Activated naive CD4-positive, alpha-beta T cell treated with anti-CD3 and anti-CD28 coated beads for 36 hours (primary cell): ENCODE measurements at regions of chr11 and their contacts with region 1.

Region 1: GRCh38 chr11:63768237-63769043 is at the start of gene ZFTA:
- DNase-seq: peak; percentile 49
- H3K4me3 Mint-ChIP-seq: peak within 1 kb of the TSS; percentile 88
- H3K27ac Mint-ChIP-seq: no peak within 1 kb of the TSS
- H3K4me1 Mint-ChIP-seq: peaks cover 11% of the 10 kb centered on the region
- H3K27me3 Mint-ChIP-seq: peaks cover 12% of the 10 kb centered on the region
- total RNA-seq, gene ZFTA: 0.91 TPM

Region 2: GRCh38 chr11:63582935-63583677 is 185.3 kb before region 1 on chr11:
- CTCF ChIA-PET with region 1: no interaction called
- intact Hi-C with region 1: no loop called
- DNase-seq: no peak
- H3K4me3 Mint-ChIP-seq: no peak overlapping the region
- H3K27ac Mint-ChIP-seq: no peak overlapping the region
- H3K4me1 Mint-ChIP-seq: peaks cover 12% of the 10 kb centered on the region
- H3K27me3 Mint-ChIP-seq: no peaks in the 10 kb centered on the region

Region 3: DNA sequence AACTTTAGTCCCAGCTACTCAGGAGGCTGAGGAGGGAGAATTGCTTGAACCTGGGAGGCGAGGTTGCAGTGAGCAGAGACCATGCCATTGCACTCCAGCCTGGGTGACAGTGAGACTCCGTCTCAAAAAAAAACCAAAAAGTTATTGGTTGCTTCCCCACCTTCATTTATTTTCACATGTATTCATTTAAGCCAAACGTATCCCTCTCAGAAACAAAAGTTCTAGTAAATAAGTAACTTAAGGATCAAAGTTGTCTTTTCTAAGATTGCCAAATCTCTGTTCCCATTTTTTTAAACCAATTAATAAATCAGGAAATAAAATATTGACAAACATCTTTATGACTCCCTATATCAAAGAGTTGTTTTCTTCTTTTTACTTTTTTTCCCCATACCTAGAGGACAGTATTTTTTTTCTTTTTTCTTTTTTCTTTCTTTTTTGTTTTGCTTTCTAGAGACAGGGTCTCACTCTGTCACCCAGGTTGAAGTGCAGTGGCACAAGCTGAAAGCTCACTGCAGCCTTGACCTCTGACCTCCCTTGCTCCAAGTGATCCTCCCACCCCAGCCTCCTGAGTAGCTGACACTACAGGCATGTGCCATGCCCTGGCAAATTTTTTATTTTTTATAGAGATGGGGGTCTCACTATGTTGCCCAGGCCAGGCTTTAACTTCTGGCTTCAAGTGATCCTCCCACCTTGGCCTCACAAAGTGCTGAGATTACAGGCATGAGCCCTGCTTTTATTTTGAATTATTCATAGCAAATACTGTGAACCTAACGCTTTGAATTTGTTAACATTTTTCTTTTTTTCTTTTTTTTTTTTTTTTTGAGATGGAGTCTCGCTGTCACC is 11.3 kb before region 1 on chr11:
- CTCF ChIA-PET with region 1: interaction called, 10 read pairs
- intact Hi-C with region 1: no loop called
- DNase-seq: no peak
- H3K4me3 Mint-ChIP-seq: no peak overlapping the region
- H3K27ac Mint-ChIP-seq: no peak overlapping the region
- H3K4me1 Mint-ChIP-seq: no peaks in the 10 kb centered on the region
- H3K27me3 Mint-ChIP-seq: no peaks in the 10 kb centered on the region

Region 4: DNA sequence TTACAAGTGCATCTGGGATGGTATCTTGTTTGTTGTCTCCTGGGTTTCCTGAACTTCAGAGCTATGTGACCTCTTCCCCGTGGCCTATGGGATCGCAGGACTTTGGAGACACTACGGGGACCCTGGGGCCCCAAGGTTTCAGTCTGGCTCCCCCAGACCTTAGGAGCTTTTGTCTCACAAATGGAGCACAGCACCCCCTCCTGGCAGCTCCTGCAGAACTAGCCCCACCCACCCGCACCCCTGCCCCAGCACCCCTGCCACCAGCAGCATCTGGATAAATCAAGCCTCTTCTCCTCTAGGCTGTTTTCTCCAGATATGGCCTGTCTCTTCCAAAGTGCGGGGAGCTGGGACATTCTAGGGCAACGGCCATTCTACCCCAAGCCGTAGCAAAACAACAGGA is 138.1 kb after region 1 on chr11:
- CTCF ChIA-PET with region 1: no interaction called
- intact Hi-C with region 1: loop called (anchors 2 kb)
- DNase-seq: peak; percentile 65
- H3K4me3 Mint-ChIP-seq: no peak overlapping the region
- H3K27ac Mint-ChIP-seq: no peak overlapping the region
- H3K4me1 Mint-ChIP-seq: no peaks in the 10 kb centered on the region
- H3K27me3 Mint-ChIP-seq: no peaks in the 10 kb centered on the region

Region 5: DNA sequence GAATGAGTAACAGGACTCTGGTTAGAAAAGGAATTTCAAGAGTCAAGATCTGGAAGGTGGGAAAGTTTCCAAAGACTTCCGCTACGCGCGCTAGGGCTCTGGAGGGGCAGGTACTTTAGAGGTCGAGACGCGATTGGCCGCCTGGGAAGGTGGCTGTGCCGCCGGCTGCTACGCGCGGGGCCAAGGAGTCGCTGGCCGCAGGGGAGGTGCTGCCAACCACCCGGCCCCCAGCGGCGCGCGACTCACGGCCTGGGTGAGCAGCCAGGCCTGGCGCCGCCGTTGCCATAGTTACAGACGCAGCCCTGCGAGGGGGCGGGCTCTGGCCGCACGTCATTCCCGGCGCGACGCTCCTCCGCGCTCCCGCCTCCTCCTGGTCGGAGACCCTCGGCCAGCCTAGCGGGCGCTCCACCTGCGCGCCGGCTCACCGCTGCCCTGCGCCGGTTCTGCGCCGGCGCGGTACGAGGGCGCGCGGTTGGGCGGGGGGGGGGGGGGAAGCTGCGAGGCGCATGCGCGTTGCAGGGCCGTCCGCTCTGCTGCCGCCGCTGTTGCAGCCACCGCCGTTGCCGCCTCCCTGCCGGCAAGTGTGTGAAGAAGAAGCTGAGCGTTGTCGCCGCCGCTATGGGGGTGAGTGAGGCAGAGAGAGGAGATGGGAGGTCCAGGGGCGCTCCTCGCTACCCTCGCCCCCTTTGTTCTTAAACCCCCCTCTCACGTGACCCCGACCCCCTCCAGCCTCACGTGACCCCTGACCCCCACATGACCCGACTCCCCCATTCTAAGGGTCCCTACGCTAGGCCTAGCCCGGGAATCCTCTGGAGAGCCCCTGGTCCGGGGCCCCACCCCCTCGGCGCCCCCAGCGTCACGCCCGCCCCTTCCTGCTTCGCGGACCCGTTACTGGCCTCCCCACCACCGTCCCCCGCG is 170.3 kb after region 1 on chr11 and contains the start of gene NAA40:
- CTCF ChIA-PET with region 1: no interaction called
- intact Hi-C with region 1: loop called (anchors 5 kb)
- DNase-seq: peak; percentile 90
- H3K4me3 Mint-ChIP-seq: peak within 1 kb of the TSS; percentile 77
- H3K27ac Mint-ChIP-seq: peak within 1 kb of the TSS; percentile 52
- H3K4me1 Mint-ChIP-seq: peaks cover 13% of the 10 kb centered on the region
- H3K27me3 Mint-ChIP-seq: no peaks in the 10 kb centered on the region
- total RNA-seq, gene NAA40: 10.3 to 13.2 TPM

Region 6: GRCh38 chr11:63945477-63946163 is 177.2 kb after region 1 on chr11:
- CTCF ChIA-PET with region 1: interaction called, 17 read pairs
- intact Hi-C with region 1: no loop called
- DNase-seq: peak; percentile 65
- H3K4me3 Mint-ChIP-seq: no peak overlapping the region
- H3K27ac Mint-ChIP-seq: no peak overlapping the region
- H3K4me1 Mint-ChIP-seq: peaks cover 3% of the 10 kb centered on the region
- H3K27me3 Mint-ChIP-seq: no peaks in the 10 kb centered on the region

Region 7: DNA sequence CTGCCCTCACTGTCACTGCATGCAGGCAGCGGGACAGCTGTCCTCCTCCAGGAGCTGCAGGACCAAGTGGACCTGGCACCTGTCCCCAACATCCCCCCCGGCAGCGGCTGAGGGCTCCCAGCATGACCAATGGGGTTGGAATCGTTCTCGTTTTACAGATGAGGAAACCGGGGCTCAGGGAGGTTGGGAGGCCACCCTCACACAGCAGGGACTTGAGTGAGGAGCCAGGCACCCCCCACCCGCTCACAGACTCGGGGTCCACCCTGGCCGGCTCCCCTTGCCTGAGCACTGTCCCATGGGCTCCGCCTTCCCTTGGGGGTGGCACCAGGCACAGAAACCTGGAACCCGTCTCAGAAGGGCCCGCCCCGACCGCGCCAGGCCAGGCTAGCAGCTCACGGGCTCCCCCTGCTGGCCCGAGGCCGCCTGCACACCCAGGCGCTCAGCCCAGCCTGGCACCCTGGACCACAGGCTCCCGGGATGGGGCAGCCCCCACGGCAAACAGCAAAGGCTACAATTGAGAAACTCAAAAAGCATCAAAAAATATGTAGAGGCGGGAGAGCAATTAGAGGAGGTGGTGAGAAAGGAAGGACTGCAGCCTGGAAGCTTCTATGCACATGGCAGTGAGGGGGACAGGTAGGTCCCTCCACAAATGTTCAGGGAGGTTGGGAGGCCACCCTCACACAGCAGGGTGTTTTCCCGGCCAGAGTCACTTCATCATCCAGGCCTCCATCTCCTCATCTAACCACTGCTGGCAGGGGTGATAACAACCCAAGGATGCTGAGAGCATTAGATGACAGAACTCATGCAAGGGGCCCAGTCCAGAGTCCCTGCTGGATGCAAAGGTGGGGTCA is 384.6 kb after region 1 on chr11:
- CTCF ChIA-PET with region 1: no interaction called
- intact Hi-C with region 1: loop called (anchors 1 kb)
- DNase-seq: peak; percentile 71
- H3K4me3 Mint-ChIP-seq: no peak overlapping the region
- H3K27ac Mint-ChIP-seq: no peak overlapping the region
- H3K4me1 Mint-ChIP-seq: peaks cover 3% of the 10 kb centered on the region
- H3K27me3 Mint-ChIP-seq: no peaks in the 10 kb centered on the region